A549 (cell line): ENCODE measurements at regions of chr19 and their contacts with region 1.

Region 1: GRCh38 chr19:35090506-35091237 is 25.0 kb upstream of the FXYD3 start:
- DNase-seq: peak; percentile 82 to 99
- ATAC-seq: peak; percentile 82 to 92
- H3K4me3 ChIP-seq: peak overlapping the region; percentile 29; the same call in 2 of the 3 replicates
- H3K27ac ChIP-seq: peak overlapping the region; percentile 10 to 60; a peak in 4 of 6 replicates
- H3K4me1 ChIP-seq: peaks cover 11% of the 10 kb centered on the region; the same call in 2 of the 3 replicates
- CTCF ChIP-seq: peak; percentile 95
- EP300 ChIP-seq: no peak
- POLR2A ChIP-seq: no peak
- RAD21 ChIP-seq: peak; percentile 88 to 97

Region 2: DNA sequence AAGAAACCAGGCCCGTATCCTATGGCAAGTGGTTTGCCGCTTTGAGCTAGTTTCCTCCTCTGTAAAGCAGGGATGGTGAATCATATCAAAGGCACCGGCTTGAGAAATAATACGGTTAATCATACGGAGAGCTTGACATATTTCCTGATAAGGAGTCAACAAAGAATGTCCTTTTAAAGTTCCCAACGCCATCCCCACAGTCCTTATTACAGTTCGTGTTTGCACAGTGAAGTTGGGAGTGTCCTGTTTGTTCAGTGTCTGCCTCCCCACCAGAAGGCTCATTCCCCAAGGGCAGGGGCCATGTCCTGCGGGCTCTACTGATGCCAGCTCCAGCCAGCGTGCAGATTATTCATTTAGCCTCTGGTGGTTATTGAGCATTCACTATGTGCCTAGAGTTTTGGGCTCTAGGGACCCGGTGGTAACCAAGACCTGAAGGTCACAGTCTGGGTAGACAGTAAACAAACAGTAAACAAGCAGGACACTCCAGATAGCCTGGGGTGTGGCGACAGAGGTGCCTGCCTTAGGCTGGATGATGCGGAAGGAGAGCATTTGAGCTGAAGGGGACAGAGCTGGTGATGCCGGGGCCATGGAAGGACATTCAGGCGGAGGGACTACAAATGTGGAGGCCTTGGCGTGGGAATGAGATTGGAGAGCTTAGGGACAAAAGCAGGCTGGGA is 84.2 kb before region 1 on chr19:
- CTCF ChIA-PET with region 1: interaction called, 10 read pairs
- POLR2A ChIA-PET with region 1: no interaction called
- DNase-seq: peak; percentile 98 to 100
- ATAC-seq: peak; percentile 84 to 92
- H3K4me3 ChIP-seq: peak overlapping the region; percentile 25
- H3K27ac ChIP-seq: peak overlapping the region; percentile 93 to 94
- H3K4me1 ChIP-seq: peaks cover 79% of the 10 kb centered on the region
- CTCF ChIP-seq: peak; percentile 24; the same call in 2 of the 3 replicates
- EP300 ChIP-seq: peak; percentile 97
- POLR2A ChIP-seq: no peak
- RAD21 ChIP-seq: peak; percentile 27 to 71

Region 3: GRCh38 chr19:35055715-35056179 is 34.9 kb before region 1 on chr19:
- CTCF ChIA-PET with region 1: interaction called, 46 read pairs
- POLR2A ChIA-PET with region 1: no interaction called
- DNase-seq: peak in 1 of 2 experiments; percentile 51
- ATAC-seq: peak; percentile 78 to 86
- H3K4me3 ChIP-seq: no peak overlapping the region
- H3K27ac ChIP-seq: no peak overlapping the region
- H3K4me1 ChIP-seq: peaks cover 7% of the 10 kb centered on the region; the same call in 1 of the 3 replicates
- CTCF ChIP-seq: peak; percentile 45
- EP300 ChIP-seq: no peak
- POLR2A ChIP-seq: no peak
- RAD21 ChIP-seq: peak; percentile 45 to 51; a peak in 3 of 5 replicates

Region 4: DNA sequence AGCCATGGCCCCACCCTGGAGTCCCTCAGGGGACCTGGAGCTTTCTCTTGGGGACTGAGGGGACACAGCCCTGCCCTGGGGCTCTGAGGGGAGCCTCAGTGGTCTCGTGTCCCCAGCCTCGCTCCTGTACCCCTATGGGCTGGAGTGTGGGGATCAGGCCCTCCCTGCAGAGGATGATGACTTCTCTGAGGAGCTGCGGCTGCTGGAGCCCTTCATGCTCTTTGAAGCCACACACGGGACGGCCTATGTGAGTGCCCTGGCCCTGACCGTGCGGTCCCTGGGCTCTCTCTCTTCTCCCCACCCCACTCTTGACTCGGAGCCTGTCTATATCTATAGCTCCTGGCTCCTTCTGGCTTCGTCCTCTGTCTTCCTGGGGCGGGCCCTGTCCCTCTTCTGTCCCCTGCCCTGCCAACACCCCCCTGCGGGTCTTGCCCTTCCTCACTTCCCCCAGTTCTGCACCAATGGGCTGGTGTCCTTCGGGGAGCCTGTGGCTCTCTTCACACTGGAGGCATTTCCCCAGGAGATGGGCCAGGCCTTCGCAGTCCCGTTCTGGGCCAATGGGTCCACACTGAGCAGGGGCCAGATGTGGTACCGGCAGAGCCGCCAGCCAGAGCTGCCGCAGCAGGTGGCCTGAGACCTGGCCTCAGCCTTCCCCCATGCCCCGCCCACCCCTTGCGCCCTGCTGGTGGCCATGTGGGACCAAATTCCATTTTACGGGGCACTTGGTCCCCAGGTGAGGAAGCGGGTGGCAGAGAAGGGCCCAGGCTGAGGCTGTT is 16.1 kb before region 1 on chr19:
- CTCF ChIA-PET with region 1: interaction called, 27 read pairs
- POLR2A ChIA-PET with region 1: no interaction called
- DNase-seq: no peak
- ATAC-seq: peak in 1 of 2 experiments; percentile 30; a peak in 3 of 6 replicates
- H3K4me3 ChIP-seq: no peak overlapping the region
- H3K27ac ChIP-seq: no peak overlapping the region
- H3K4me1 ChIP-seq: no peaks in the 10 kb centered on the region
- CTCF ChIP-seq: no peak
- EP300 ChIP-seq: no peak
- POLR2A ChIP-seq: no peak
- RAD21 ChIP-seq: no peak

Region 5: DNA sequence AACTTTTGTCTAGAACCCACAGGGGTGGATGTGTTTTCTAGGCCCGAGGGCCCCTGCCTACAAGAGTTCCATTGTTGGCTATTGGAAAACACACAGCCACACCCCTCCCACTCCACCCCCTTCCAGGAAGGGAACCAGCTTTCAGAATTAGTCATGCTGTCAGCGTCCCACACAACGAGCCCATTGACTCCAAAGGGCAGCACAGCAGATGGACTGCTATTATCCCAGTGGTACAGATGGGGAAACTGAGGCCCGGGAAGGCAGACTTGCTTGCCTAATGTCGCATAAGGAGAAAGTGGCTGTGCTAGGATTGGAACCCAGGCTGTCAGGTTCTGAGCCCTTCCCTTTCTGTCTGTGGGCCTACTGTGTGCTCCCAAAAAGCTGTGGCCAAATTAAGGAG is 16.9 kb after region 1 on chr19:
- CTCF ChIA-PET with region 1: interaction called, 38 read pairs
- POLR2A ChIA-PET with region 1: no interaction called
- DNase-seq: peak in 1 of 2 experiments; percentile 55
- ATAC-seq: no peak
- H3K4me3 ChIP-seq: no peak overlapping the region
- H3K27ac ChIP-seq: no peak overlapping the region
- H3K4me1 ChIP-seq: peaks cover 6% of the 10 kb centered on the region; the same call in 1 of the 3 replicates
- CTCF ChIP-seq: no peak
- EP300 ChIP-seq: no peak
- POLR2A ChIP-seq: no peak
- RAD21 ChIP-seq: no peak

Region 6: DNA sequence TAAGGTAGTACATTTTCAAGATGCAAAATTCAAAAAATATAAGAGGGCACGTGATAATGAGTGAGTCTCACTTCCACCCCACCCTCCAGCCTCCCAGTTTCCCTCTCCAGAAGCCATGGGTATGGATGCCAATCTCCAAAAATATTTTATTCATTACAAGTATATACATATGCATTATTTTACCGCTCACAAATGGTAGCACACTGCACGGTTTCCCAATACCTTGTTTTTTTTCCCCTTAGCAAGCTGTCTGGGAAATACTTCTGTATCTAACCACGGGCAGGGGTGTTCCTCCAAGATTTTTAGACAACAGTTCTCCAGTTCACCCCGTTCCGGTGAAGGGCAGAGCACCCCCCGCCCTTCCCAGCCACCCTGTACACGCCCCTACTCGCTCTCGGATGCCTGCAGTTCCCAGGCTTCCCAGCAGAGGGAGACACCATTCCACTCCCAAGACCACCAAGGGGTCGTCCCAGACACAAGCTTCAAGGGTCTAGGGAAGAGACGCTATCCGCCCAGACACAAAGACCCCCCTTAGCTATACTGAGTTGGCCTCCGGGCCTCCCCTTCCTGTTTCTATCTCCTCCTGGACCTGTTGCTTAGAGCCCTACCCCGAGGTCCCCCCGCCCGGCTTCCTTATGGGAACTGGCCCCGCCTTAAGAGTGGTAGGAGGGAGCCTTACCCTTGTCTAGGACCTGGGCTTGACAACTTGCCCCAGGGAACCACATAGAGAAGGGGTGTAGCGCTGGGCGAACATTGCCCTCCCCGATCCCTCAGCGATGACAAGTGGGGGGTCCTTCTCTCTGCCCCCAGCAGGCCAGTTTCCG is 23.9 kb after region 1 on chr19:
- CTCF ChIA-PET with region 1: interaction called, 28 read pairs
- POLR2A ChIA-PET with region 1: no interaction called
- DNase-seq: peak; percentile 74 to 95
- ATAC-seq: peak; percentile 45 to 86
- H3K4me3 ChIP-seq: peak overlapping the region; percentile 6; the same call in 2 of the 3 replicates
- H3K27ac ChIP-seq: peak overlapping the region; percentile 19 to 36; a peak in 3 of 6 replicates
- H3K4me1 ChIP-seq: peaks cover 13% of the 10 kb centered on the region; the same call in 1 of the 3 replicates
- CTCF ChIP-seq: peak; percentile 98
- EP300 ChIP-seq: no peak
- POLR2A ChIP-seq: no peak
- RAD21 ChIP-seq: peak; percentile 80

Region 7: GRCh38 chr19:35262101-35262761 is 171.6 kb after region 1 on chr19:
- CTCF ChIA-PET with region 1: no interaction called
- POLR2A ChIA-PET with region 1: no interaction called
- DNase-seq: no peak
- ATAC-seq: peak in 1 of 2 experiments; percentile 15; a peak in 3 of 6 replicates
- H3K4me3 ChIP-seq: no peak overlapping the region
- H3K27ac ChIP-seq: no peak overlapping the region
- H3K4me1 ChIP-seq: peaks cover 6% of the 10 kb centered on the region
- CTCF ChIP-seq: no peak
- EP300 ChIP-seq: no peak
- POLR2A ChIP-seq: peak; percentile 22
- RAD21 ChIP-seq: no peak